Left lung (tissue), 14 donors: ENCODE measurements at regions of chr14 and their contacts with region 1.

Region 1: GRCh38 chr14:61475316-61475715 is 153.9 kb downstream of the PRKCH start:
- DNase-seq: peak in 1 of 4 donors; percentile 64
- ATAC-seq: peak; percentile 43
- H3K4me3 ChIP-seq: no peak overlapping the region
- H3K27ac ChIP-seq: peak overlapping the region; percentile 95 to 98
- H3K4me1 ChIP-seq: peaks cover 25 to 100% of the 10 kb centered on the region in 2 donors
- H3K27me3 ChIP-seq: no peaks in the 10 kb centered on the region
- CTCF ChIP-seq: peak; percentile 69 to 79

Region 2: GRCh38 chr14:61694830-61695694 is 219.7 kb after region 1 on chr14 and contains the start of gene HIF1A:
- intact Hi-C with region 1: loop called in 1 of 2 experiments (anchors 10 kb)
- DNase-seq: peak; percentile 98 to 100 (median 98)
- ATAC-seq: peak; percentile 93
- H3K4me3 ChIP-seq: peak within 1 kb of the TSS; percentile 85 to 86
- H3K27ac ChIP-seq: peak within 1 kb of the TSS; percentile 99 to 100
- H3K4me1 ChIP-seq: peaks cover 0 to 22% of the 10 kb centered on the region in 2 donors
- H3K27me3 ChIP-seq: no peaks in the 10 kb centered on the region
- CTCF ChIP-seq: no peak
- polyA plus RNA-seq, gene HIF1A: 194 to 231 (median 204) TPM